ENCODE measurements at regions of chr11 and their contacts with region 1.

Region 1: GRCh38 chr11:24078018-24078417 is 418.8 kb upstream of the LUZP2 start:
- DNase-seq: peak; percentile 87
- ATAC-seq: peak; percentile 88
- H3K4me3 ChIP-seq: no peak overlapping the region
- H3K27ac ChIP-seq: peak overlapping the region; percentile 99; the same call in 1 of the 2 replicates
- H3K4me1 ChIP-seq: peaks cover 14% of the 10 kb centered on the region
- H3K27me3 ChIP-seq: no peaks in the 10 kb centered on the region
- CTCF ChIP-seq: no peak
- POLR2A ChIP-seq: no peak
- RAD21 ChIP-seq: no peak

Region 2: DNA sequence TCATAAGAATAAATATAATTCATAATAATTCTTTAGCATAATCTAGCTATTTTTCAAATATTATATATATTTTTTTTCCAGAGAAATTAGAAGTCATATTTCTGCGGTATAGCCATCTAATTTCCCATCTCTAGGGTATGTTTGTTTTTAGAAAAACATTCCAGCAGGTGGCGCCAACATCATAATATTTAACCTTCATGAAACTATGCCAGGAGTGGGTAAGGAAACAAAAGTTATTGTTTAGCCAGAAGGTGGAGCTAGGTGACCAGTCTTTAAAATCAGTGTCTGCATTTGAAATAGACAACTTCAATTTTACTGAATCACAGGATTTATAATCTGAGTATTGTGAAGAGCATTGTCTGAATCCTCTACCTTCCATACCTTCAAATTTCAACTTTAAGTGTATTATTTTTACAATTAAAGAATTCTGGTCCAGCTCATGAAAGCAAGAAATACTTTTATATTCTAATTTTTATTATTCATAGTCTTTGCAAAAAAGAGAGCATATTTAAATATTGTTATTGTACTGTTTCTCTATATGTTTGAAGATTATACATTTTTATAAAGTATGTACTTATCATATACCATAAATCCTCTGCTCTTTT is 1202.0 kb before region 1 on chr11:
- CTCF ChIA-PET with region 1: no interaction called
- POLR2A ChIA-PET with region 1: no interaction called
- dilution Hi-C with region 1: no loop called
- in situ Hi-C with region 1: no loop called
- intact Hi-C with region 1: loop called (anchors 5 kb)
- DNase-seq: peak; percentile 89
- ATAC-seq: peak; percentile 79
- H3K4me3 ChIP-seq: no peak overlapping the region
- H3K27ac ChIP-seq: no peak overlapping the region
- H3K4me1 ChIP-seq: peaks cover 4% of the 10 kb centered on the region
- H3K27me3 ChIP-seq: no peaks in the 10 kb centered on the region
- CTCF ChIP-seq: peak; percentile 99
- POLR2A ChIP-seq: no peak
- RAD21 ChIP-seq: peak; percentile 90

Region 3: GRCh38 chr11:23897453-23898286 is 180.3 kb before region 1 on chr11:
- CTCF ChIA-PET with region 1: no interaction called
- POLR2A ChIA-PET with region 1: no interaction called
- dilution Hi-C with region 1: no loop called
- in situ Hi-C with region 1: no loop called
- intact Hi-C with region 1: loop called (anchors 5 kb)
- DNase-seq: peak; percentile 94
- ATAC-seq: peak; percentile 92
- H3K4me3 ChIP-seq: peak overlapping the region; percentile 29; the same call in 1 of the 2 replicates
- H3K27ac ChIP-seq: peak overlapping the region; percentile 99
- H3K4me1 ChIP-seq: peaks cover 13% of the 10 kb centered on the region
- H3K27me3 ChIP-seq: no peaks in the 10 kb centered on the region
- CTCF ChIP-seq: no peak
- POLR2A ChIP-seq: no peak
- RAD21 ChIP-seq: no peak; the same call in 1 of the 2 replicates

Region 4: GRCh38 chr11:23944923-23945322 is 133.1 kb before region 1 on chr11:
- CTCF ChIA-PET with region 1: no interaction called
- POLR2A ChIA-PET with region 1: no interaction called
- dilution Hi-C with region 1: no loop called
- in situ Hi-C with region 1: no loop called
- intact Hi-C with region 1: loop called (anchors 5 kb)
- DNase-seq: no peak
- ATAC-seq: no peak
- H3K4me3 ChIP-seq: no peak overlapping the region
- H3K27ac ChIP-seq: no peak overlapping the region
- H3K4me1 ChIP-seq: peaks cover 7% of the 10 kb centered on the region
- H3K27me3 ChIP-seq: no peaks in the 10 kb centered on the region
- CTCF ChIP-seq: no peak
- POLR2A ChIP-seq: no peak
- RAD21 ChIP-seq: no peak

Region 5: DNA sequence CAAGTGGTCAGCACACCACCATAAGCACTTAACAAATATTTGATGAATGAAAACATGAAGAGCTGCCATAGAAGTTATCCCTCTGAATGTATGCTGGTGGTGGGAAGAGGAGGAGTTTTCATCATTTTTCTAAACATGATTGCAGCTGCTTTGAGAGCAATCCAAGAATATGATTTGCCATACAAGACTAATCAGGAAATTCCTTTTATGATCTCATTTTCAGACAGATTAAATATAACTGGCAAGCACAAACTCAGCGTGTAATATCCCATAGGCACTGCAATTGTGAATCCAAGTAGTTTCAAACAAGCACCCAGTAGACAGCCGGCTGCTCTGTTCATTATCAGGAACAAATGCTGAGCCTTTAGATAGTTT is 86.9 kb before region 1 on chr11:
- CTCF ChIA-PET with region 1: no interaction called
- POLR2A ChIA-PET with region 1: no interaction called
- dilution Hi-C with region 1: no loop called
- in situ Hi-C with region 1: no loop called
- intact Hi-C with region 1: loop called (anchors 5 kb)
- DNase-seq: peak; percentile 90
- ATAC-seq: peak; percentile 68
- H3K4me3 ChIP-seq: no peak overlapping the region
- H3K27ac ChIP-seq: peak overlapping the region; percentile 96
- H3K4me1 ChIP-seq: peaks cover 21% of the 10 kb centered on the region
- H3K27me3 ChIP-seq: no peaks in the 10 kb centered on the region
- CTCF ChIP-seq: no peak
- POLR2A ChIP-seq: no peak
- RAD21 ChIP-seq: no peak

Region 6: GRCh38 chr11:24145411-24145810 is 67.4 kb after region 1 on chr11:
- CTCF ChIA-PET with region 1: no interaction called
- POLR2A ChIA-PET with region 1: no interaction called
- dilution Hi-C with region 1: no loop called
- in situ Hi-C with region 1: no loop called
- intact Hi-C with region 1: no loop called
- DNase-seq: peak; percentile 2
- ATAC-seq: no peak
- H3K4me3 ChIP-seq: no peak overlapping the region
- H3K27ac ChIP-seq: no peak overlapping the region
- H3K4me1 ChIP-seq: no peaks in the 10 kb centered on the region
- H3K27me3 ChIP-seq: no peaks in the 10 kb centered on the region
- CTCF ChIP-seq: no peak
- POLR2A ChIP-seq: no peak
- RAD21 ChIP-seq: no peak

Region 7: DNA sequence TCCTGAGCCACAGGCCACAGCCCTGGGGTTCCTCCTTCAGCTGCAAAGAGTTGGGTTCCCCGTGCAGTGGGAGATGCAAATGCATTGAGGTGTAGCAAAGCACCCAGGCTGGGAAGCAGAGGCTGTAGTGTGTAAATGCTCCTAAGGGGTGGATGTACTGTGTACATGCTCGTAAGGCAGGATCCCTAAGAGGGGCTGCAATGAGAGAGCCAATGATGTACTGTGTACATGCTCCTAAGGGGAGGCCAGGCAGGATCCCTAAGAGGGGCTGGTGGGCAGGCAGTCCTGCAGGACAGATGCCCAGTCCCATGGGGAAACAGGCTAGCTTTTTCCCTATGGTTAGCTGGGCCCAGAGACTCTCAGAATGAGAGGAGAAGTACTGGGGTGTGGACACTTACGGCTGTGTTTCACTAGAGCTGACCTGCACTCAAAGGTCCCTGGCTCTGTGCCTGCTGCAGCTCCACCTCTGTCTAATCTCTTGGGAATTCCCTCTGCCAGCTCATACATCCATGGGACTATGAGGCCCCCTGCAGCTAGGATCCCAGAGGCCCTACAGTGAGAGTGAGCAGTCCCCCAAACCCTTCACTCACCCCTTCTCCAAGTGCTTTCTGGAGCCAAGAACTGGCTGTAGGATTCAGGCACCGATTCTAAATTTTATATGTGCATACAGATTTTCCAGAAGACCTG is 156.9 kb after region 1 on chr11:
- CTCF ChIA-PET with region 1: no interaction called
- POLR2A ChIA-PET with region 1: no interaction called
- dilution Hi-C with region 1: no loop called
- in situ Hi-C with region 1: no loop called
- intact Hi-C with region 1: loop called (anchors 5 kb)
- DNase-seq: peak; percentile 79
- ATAC-seq: peak; percentile 64
- H3K4me3 ChIP-seq: no peak overlapping the region
- H3K27ac ChIP-seq: no peak overlapping the region; the same call in 1 of the 2 replicates
- H3K4me1 ChIP-seq: peaks cover 8% of the 10 kb centered on the region
- H3K27me3 ChIP-seq: no peaks in the 10 kb centered on the region
- CTCF ChIP-seq: peak; percentile 56
- POLR2A ChIP-seq: no peak
- RAD21 ChIP-seq: peak; percentile 73